ENCODE measurements at regions of chr9 and their contacts with region 1.

Region 1: DNA sequence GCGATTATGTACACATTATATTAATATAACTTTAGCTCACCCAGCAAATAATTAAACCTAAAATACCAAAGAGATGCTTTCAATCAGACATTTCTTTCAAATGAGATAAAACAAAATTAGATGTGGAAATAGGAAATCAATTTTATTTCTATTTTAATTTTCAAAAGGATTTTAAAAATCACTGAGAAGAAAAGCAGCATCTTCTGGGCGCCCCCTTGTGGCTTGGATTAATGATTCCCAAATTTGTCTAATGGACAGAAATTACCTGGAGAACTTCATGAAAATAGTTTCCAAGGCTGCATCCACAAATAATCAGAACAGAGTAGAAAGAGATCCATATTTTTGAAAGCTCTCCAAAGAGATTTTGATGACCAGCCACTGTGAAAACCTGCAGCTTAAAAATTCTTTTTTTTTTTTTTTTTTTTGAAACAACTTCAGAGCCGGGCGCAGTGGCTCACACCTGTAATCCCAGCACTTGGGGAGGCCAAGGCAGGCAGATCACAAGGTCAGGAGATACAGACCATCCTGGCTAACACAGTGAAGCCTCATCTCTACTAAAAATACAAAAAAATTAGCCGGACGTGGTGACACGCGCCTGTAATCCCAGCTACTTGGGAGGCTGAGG is 50.9 kb upstream of the CEMIP2 start:
- DNase-seq: peak in 2 of 6 donors; percentile 21 to 39
- ATAC-seq: peak in 1 of 4 donors; percentile 39
- H3K4me3 ChIP-seq: no peak overlapping the region
- H3K27ac ChIP-seq: no peak overlapping the region
- H3K4me1 ChIP-seq: peaks cover 0 to 4% (median 0%) of the 10 kb centered on the region in 3 donors
- H3K27me3 ChIP-seq: no peaks in the 10 kb centered on the region
- CTCF ChIP-seq: peak; percentile 42 to 71 (median 62)

Region 2: DNA sequence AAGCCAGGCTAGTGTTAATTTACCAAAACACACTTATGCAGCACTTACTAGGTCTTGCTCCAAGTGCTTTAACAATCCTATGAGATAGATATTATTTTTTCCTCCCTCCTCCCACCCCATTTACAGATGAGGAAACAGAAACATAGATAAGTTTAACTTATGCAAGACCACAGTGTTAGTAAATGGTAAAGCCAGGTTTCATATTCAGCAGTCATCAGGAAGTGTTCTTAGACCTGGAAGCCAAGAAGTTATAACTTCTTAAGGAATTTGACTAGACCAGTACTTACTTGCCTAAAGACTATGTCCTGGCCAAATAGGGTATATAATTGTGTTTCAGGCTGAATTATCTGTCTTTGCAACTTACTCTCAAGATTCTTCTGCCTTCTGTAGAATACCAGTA is 75.9 kb after region 1 on chr9:
- intact Hi-C with region 1: no loop called
- DNase-seq: no peak
- ATAC-seq: peak in 3 of 4 donors; percentile 29 to 68 (median 44)
- H3K4me3 ChIP-seq: no peak overlapping the region
- H3K27ac ChIP-seq: no peak overlapping the region
- H3K4me1 ChIP-seq: peaks cover 5 to 21% (median 18%) of the 10 kb centered on the region in 3 donors
- H3K27me3 ChIP-seq: no peaks in the 10 kb centered on the region
- CTCF ChIP-seq: no peak

Region 3: DNA sequence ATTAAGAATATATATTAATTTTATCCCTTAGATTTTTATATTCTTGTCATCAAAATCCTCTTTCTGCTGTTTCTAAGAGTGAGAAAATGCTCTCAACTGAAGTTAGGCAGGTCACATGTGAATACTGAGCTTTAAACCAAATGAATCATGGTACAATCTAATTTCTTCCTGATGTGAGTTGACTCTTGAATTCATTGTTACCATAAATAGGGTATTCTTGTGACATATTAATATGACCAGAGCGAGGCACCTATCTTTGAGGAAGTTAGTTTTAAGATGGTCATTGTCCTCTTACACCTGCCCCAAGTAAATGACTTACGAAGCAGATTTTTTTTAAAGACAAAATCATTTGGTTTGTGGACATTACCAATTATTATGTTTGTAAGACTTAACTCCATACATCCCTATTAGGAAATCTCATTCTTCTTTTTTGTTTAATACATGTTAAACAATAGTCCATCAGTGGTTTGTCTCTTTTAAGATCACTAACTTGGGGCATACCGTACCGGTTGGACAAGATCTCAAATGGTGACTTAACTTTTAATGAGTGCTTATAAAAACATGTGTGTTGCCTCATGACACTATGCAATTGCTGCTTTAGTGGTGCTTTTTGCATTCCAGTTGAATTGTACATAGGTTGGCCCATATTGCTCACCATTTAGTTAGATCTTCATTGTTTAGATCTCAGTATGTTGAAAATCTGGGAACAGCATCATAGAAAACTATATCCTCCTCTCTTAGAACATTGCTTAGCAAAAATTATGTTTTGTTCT is 109.8 kb after region 1 on chr9:
- intact Hi-C with region 1: no loop called
- DNase-seq: no peak
- ATAC-seq: no peak
- H3K4me3 ChIP-seq: no peak overlapping the region
- H3K27ac ChIP-seq: no peak overlapping the region
- H3K4me1 ChIP-seq: peaks cover 0 to 4% (median 0%) of the 10 kb centered on the region in 3 donors
- H3K27me3 ChIP-seq: no peaks in the 10 kb centered on the region
- CTCF ChIP-seq: no peak

Region 4: DNA sequence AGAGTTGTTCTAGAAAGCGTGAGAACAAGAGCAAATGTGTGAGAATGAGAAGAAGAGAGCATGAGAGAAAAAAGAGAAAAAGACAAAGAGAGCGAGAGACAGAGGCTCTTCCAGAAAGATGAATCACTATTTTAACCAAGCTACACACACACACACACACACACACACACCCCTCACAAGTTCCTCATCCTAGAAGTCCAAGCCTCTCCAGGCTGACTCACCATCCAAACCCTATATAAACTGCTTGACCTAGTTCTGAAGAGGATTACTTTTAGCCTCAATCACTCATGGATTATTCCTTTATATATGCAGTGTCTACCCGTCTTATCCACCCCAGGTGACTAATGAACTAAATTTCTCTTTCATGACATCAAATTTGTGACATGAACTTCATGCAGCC is 203.6 kb after region 1 on chr9:
- intact Hi-C with region 1: loop called in 1 of 3 experiments (anchors 10 kb)
- DNase-seq: no peak
- ATAC-seq: peak in 3 of 4 donors; percentile 31 to 66 (median 55)
- H3K4me3 ChIP-seq: no peak overlapping the region
- H3K27ac ChIP-seq: no peak overlapping the region
- H3K4me1 ChIP-seq: no peaks in the 10 kb centered on the region
- H3K27me3 ChIP-seq: no peaks in the 10 kb centered on the region
- CTCF ChIP-seq: no peak

Measured in pancreas (tissue), 10 donors.